ENCODE measurements at regions of chr19 and their contacts with region 1.

Region 1: GRCh38 chr19:48637170-48637947 is at the start of gene DBP:
- DNase-seq: peak; percentile 99 to 100 (median 100)
- ATAC-seq: peak; percentile 70
- H3K4me3 ChIP-seq: peak within 1 kb of the TSS; percentile 76 to 97
- H3K4me3 Mint-ChIP-seq: peak within 1 kb of the TSS; percentile 98
- H3K27ac ChIP-seq: peak within 1 kb of the TSS; percentile 93 to 95
- H3K27ac Mint-ChIP-seq: peak within 1 kb of the TSS; percentile 98
- H3K4me1 ChIP-seq: peaks cover 43% of the 10 kb centered on the region
- H3K4me1 Mint-ChIP-seq: peaks cover 43% of the 10 kb centered on the region
- H3K27me3 ChIP-seq: no peaks in the 10 kb centered on the region
- H3K27me3 Mint-ChIP-seq: no peaks in the 10 kb centered on the region
- CTCF ChIP-seq: no peak
- total RNA-seq, gene DBP: 24.8 to 25.6 TPM

Region 2: DNA sequence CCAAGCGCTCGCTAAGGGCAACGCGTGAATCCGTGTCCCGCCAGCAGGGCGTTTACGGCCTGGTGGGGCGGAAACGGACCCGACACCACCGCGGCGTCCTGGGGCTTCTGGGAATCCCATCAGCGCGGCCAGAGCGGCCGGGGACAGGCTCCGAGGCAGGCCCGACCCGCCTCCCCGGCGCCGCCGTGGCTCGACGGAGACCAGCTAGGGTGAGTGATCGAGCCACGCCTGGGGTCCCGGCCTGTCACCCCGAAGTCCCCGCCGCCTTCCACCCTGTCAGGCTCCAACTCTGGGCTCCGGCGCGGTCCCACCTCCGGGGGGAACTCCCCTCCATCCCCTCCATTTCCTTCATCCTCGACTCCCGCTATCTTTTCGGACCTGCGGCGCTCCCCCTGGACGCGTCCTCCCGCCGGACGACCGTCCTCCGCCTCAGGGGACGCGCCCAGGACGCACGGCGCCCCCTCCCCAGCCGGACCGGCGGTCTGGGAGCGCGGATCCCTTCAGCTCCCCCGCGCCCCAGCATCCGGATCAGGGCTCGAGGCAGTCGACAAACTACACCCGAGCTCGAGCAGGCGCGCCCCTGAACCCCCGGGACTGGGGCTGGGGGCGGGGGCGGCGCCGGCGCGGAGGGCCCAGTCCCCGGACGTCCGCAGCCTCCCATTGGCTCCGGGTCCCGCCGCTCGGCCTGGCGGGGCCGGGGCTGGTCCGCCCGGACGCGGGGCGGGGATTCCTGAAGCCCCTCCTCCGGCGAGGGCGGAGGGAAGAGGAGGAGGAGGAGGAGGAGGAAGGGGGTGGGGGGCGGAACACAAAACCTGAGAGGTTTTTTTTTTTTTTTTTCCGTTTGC is 1029.1 kb before region 1 on chr19:
- CTCF ChIA-PET with region 1: no interaction called
- POLR2A ChIA-PET with region 1: no interaction called
- intact Hi-C with region 1: loop called in 1 of 2 experiments (anchors 5 kb)
- DNase-seq: peak; percentile 93 to 98 (median 95)
- ATAC-seq: peak; percentile 87
- H3K4me3 ChIP-seq: peak overlapping the region; percentile 84 to 99
- H3K4me3 Mint-ChIP-seq: peak overlapping the region; percentile 84
- H3K27ac ChIP-seq: peak overlapping the region; percentile 82 to 85
- H3K27ac Mint-ChIP-seq: peak overlapping the region; percentile 77
- H3K4me1 ChIP-seq: peaks cover 17% of the 10 kb centered on the region
- H3K4me1 Mint-ChIP-seq: peaks cover 29% of the 10 kb centered on the region
- H3K27me3 ChIP-seq: no peaks in the 10 kb centered on the region
- H3K27me3 Mint-ChIP-seq: no peaks in the 10 kb centered on the region
- CTCF ChIP-seq: no peak

Region 3: GRCh38 chr19:48363810-48364563 is 273.4 kb before region 1 on chr19 and contains the starts of genes SYNGR4 and TMEM143:
- CTCF ChIA-PET with region 1: no interaction called
- POLR2A ChIA-PET with region 1: interaction called, 3 read pairs
- intact Hi-C with region 1: loop called in 1 of 2 experiments (anchors 2 kb)
- DNase-seq: peak; percentile 96 to 100 (median 98)
- ATAC-seq: peak; percentile 88
- H3K4me3 ChIP-seq: peak within 1 kb of the TSS; percentile 82 to 90
- H3K4me3 Mint-ChIP-seq: peak within 1 kb of the TSS; percentile 83
- H3K27ac ChIP-seq: peak within 1 kb of the TSS; percentile 64 to 89
- H3K27ac Mint-ChIP-seq: peak within 1 kb of the TSS; percentile 86
- H3K4me1 ChIP-seq: peaks cover 17% of the 10 kb centered on the region
- H3K4me1 Mint-ChIP-seq: peaks cover 19% of the 10 kb centered on the region
- H3K27me3 ChIP-seq: no peaks in the 10 kb centered on the region
- H3K27me3 Mint-ChIP-seq: no peaks in the 10 kb centered on the region
- CTCF ChIP-seq: no peak
- total RNA-seq, gene SYNGR4: not detected
- total RNA-seq, gene TMEM143: 6.4 to 7.7 TPM

Region 4: DNA sequence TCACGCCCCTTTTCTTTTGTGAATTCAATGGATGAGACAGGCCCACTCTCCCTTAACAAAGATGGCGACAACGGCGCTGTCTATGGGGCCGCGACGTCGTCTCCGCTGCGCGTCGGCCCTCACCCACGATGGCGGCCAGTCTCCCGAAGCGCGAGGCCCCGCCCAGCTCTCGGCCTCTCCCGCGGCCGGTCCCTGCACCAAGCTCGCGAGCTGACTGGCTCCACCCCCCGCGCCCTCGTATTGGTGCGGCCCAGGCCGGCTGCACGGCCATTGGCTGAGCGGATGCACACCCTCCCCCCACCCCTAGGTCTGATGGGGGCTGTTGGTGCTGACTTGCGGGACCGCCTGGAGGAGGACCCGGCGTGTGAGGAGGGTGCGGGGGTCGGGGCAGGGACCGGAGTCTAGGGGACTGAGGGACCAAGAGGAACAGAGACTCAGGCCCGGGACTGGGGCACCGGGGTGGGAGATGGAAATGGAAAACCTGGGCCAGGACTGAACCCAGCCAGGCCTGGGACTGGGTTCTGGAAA is 13.2 kb before region 1 on chr19:
- CTCF ChIA-PET with region 1: interaction called, 11 read pairs
- POLR2A ChIA-PET with region 1: interaction called, 78 read pairs
- intact Hi-C with region 1: loop called (anchors 1 kb)
- DNase-seq: peak; percentile 87 to 98 (median 95)
- ATAC-seq: peak; percentile 74
- H3K4me3 ChIP-seq: peak overlapping the region; percentile 36 to 40
- H3K4me3 Mint-ChIP-seq: peak overlapping the region; percentile 88
- H3K27ac ChIP-seq: peak overlapping the region; percentile 16 to 63
- H3K27ac Mint-ChIP-seq: peak overlapping the region; percentile 95
- H3K4me1 ChIP-seq: peaks cover 27% of the 10 kb centered on the region
- H3K4me1 Mint-ChIP-seq: peaks cover 48% of the 10 kb centered on the region
- H3K27me3 ChIP-seq: no peaks in the 10 kb centered on the region
- H3K27me3 Mint-ChIP-seq: no peaks in the 10 kb centered on the region
- CTCF ChIP-seq: no peak

Region 5: GRCh38 chr19:48993175-48994034 is 356.0 kb after region 1 on chr19 and contains the starts of genes GYS1 and RUVBL2:
- CTCF ChIA-PET with region 1: no interaction called
- POLR2A ChIA-PET with region 1: no interaction called
- intact Hi-C with region 1: loop called (anchors 1 kb)
- DNase-seq: peak; percentile 98 to 100 (median 99)
- ATAC-seq: peak; percentile 93
- H3K4me3 ChIP-seq: peak within 1 kb of the TSS; percentile 77 to 80
- H3K4me3 Mint-ChIP-seq: peak within 1 kb of the TSS; percentile 91
- H3K27ac ChIP-seq: peak within 1 kb of the TSS; percentile 66 to 83
- H3K27ac Mint-ChIP-seq: peak within 1 kb of the TSS; percentile 93
- H3K4me1 ChIP-seq: peaks cover 22% of the 10 kb centered on the region
- H3K4me1 Mint-ChIP-seq: peaks cover 42% of the 10 kb centered on the region
- H3K27me3 ChIP-seq: no peaks in the 10 kb centered on the region
- H3K27me3 Mint-ChIP-seq: no peaks in the 10 kb centered on the region
- CTCF ChIP-seq: peak; percentile 98
- total RNA-seq, gene GYS1: 9.5 to 11.9 TPM
- total RNA-seq, gene RUVBL2: 10.5 to 11.5 TPM

Region 6: GRCh38 chr19:49817964-49818648 is 1180.7 kb after region 1 on chr19 and contains the start of gene MED25:
- CTCF ChIA-PET with region 1: no interaction called
- POLR2A ChIA-PET with region 1: no interaction called
- intact Hi-C with region 1: loop called in 1 of 2 experiments (anchors 5 kb)
- DNase-seq: peak; percentile 78 to 94 (median 87)
- ATAC-seq: peak; percentile 64
- H3K4me3 ChIP-seq: peak within 1 kb of the TSS; percentile 85 to 91
- H3K4me3 Mint-ChIP-seq: peak within 1 kb of the TSS; percentile 99
- H3K27ac ChIP-seq: peak within 1 kb of the TSS; percentile 95 to 98
- H3K27ac Mint-ChIP-seq: peak within 1 kb of the TSS; percentile 100
- H3K4me1 ChIP-seq: peaks cover 13% of the 10 kb centered on the region
- H3K4me1 Mint-ChIP-seq: peaks cover 30% of the 10 kb centered on the region
- H3K27me3 ChIP-seq: no peaks in the 10 kb centered on the region
- H3K27me3 Mint-ChIP-seq: no peaks in the 10 kb centered on the region
- CTCF ChIP-seq: peak; percentile 19
- total RNA-seq, gene MED25: 41.9 to 42.1 TPM